ENCODE measurements at regions of chr17 and their contacts with region 1.

Region 1: DNA sequence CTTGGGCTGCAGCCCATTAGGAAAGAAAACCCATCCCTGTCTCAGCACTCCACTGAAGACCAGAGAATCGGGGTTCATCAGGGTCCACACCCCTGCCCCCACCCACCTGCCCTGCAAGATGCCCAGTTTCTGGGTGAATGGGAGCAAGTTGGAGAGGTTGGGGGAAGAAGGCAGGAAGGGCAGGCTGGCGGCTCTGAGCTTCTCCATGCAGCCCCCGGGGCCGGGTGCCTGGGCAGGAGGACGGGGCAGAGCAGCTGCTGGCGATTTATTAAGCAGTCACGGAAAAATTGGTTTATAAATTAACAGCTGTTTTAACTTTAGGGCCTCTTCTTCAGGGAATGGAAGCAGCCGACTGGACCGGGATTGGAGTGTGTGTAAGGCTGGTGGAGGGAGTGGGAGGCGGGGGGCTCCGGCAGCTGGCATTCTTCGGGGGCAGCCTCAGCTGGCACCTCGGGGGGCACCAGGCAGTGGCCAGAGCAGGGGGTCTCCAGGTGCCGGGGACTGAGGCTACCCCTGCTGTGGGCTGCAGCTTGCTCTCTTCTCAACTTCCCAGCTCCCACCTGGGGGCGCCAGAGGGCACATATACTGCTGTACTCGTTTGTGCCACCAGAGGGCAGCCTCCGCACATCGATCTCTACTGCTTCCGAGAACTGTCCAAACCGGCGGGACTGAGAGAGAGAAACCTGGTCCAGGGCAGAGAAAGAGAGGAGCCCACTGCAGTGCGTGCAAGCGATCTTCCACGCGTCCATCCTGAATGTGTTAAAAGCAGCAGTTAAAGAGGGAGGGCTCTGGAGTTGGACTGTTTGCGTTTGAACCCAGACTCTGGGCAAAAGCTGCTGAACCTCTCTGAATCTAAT is 5.0 kb upstream of the PPP1R1B start:
- DNase-seq: peak; percentile 96

Region 2: DNA sequence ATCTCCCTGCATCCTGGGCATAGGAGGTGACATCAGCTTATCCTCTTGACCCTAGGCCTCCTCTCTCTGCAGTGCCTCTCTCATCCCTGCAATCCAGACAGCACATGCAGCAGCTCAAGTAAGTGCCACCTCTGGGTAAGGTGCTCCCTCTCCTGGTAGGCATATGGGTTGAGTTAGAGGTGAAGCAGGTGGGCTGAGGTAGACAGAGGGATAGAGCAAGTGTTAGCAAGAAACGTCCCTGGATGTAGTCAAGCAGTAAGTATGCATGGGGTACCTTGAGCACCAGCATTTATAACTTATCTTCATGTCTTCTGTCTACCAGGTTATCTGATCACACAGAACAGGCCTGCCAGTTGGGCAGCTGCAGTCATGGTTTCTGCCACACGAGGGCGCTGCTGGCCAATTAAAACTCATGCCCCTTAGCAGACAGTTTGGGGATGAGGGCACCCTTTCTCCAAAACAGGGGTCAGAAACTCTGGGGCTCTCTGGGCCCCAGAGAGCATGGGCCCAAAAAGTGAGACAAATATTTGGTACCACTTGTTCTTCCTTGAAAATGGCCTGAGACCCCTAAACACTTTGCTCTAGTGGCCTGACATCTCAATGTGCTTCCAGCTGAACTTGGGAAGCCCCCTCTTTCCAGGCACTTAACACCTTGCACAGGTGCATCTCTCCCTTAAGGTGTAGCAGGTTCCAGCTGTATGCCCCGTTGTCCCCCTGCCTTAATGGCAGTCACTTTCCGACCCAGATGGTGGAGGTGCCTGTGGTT is 73.9 kb before region 1 on chr17:
- intact Hi-C with region 1: loop called (anchors 5 kb)
- DNase-seq: peak; percentile 91

Region 3: GRCh38 chr17:39553341-39553945 is 68.3 kb before region 1 on chr17:
- intact Hi-C with region 1: loop called (anchors 5 kb)
- DNase-seq: no peak

Region 4: GRCh38 chr17:39643271-39643670 is 21.5 kb after region 1 on chr17:
- intact Hi-C with region 1: loop called in 1 of 2 experiments (anchors 1 kb)
- DNase-seq: no peak

Region 5: GRCh38 chr17:39754161-39754951 is 132.6 kb after region 1 on chr17:
- intact Hi-C with region 1: loop called in 1 of 2 experiments (anchors 5 kb)
- DNase-seq: peak; percentile 98